Ascending aorta (tissue), 2 donors: ENCODE measurements at regions of chr21 and their contacts with region 1.

Region 1: DNA sequence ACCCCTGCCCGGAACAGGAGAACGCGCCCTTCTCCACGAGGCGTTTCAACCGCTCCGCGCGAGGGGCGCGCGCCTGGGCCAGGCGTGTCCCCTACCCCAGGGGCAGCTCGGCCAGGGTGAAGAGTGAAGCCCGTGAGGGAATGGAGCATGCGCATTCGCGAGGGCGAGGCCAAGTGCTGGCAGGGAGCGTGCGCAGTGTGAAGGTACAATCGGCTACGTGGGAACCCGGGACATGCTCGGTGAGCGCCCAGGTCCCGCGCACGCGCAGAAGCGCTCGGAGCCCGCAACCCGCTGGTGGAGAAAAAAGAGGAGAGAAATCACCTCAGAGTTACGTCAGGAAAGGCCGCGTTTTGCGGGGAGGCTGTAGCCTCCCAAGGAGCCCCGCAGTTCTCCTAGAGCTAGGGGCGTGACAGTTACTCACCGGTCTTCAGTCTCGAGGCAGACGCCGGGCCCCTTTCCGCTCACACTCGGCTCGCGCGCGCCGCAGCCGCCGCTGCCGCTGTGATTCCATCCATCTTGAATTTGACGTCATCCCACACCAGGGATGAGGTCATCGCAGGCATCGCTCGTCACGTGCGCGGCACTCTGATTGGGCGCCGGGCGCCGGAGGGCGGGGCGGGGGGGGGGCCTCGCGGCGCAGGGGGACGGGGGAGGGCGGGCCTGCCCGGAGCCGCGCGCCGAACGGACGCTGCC is at the start of gene ZBTB21:
- DNase-seq: peak; percentile 95 to 99
- H3K4me3 ChIP-seq: peak within 1 kb of the TSS; percentile 94 to 98
- H3K27ac ChIP-seq: peak within 1 kb of the TSS; percentile 96 to 97
- H3K4me1 ChIP-seq: peaks cover 0 to 5% of the 10 kb centered on the region in 2 donors
- H3K27me3 ChIP-seq: no peaks in the 10 kb centered on the region
- CTCF ChIP-seq: no peak
- total RNA-seq, gene ZBTB21: 11.1 TPM

Region 2: DNA sequence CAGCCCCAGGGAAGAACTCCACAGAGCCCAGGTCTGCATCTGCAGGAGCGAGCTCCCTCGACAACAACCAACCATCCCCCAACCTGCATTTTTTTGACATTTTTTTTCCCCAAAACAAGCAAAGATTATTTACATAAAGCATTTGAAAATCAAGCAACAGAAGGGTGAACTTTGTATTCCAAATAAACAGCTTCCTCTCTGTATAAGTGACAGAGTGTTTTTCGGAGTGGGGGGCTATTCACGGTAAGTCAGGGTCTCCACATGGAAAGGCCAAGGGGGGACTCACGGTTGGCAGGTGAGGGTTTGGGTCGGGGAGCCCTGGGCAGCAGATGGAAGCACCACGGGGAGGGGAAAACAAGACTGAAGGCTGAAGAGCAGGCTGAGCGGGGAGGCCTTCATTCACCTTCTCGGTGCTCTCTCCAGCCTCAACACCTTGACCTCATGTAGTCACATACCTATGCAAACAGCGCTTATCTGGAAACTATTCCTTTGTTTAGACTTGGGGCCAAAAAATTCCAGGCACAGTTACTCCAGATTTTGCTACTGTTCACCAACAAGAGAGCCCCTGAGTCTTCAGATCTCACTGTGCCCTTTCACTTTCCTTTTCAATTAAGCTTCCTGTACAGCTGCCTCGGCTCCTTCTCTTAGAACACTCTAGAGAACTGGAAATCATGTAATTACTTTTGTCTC is 83.7 kb before region 1 on chr21:
- intact Hi-C with region 1: loop called (anchors 1 kb)
- DNase-seq: no peak
- H3K4me3 ChIP-seq: peak overlapping the region; percentile 39 to 58
- H3K27ac ChIP-seq: peak overlapping the region; percentile 92 to 97
- H3K4me1 ChIP-seq: peaks cover 12 to 35% of the 10 kb centered on the region in 2 donors
- H3K27me3 ChIP-seq: no peaks in the 10 kb centered on the region
- CTCF ChIP-seq: no peak

Region 3: DNA sequence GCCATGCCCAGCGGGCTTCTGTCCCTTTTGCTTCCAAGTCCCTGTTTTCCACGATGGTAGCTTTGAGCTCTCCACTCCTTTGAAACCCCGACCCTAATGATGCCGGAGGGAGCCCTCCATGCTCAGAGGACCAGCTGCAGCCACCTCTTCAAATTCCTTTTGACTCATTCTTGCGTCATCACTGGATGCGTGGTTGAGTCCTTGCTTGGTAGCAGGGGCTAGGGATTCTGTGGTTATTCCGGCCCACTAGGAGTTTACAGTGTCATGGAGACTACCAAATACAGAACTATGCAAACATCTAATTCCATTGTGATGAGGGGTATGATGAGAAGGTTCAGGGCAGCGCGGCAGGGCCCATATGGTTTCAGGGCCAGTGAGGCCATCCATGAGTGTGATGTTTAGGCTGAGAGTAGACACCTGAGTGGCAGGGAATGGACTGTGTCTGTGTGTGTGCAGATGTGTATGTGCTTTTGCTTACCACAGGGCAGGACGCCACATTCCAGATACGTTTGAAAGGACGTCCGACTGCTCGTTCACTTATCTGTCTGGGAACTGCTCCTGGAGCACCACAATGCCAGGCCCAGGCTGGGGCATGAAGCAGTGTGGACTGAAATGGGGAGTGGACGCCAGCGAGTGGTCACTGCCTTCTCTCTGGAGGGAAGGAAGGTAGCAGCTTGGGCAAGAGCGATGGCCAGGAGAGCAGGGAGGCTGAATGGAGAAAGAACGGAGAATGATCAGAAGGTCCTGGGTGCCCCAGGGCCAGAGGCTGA is 30.6 kb after region 1 on chr21:
- intact Hi-C with region 1: loop called (anchors 1 kb)
- DNase-seq: peak in 1 of 2 donors; percentile 85
- H3K4me3 ChIP-seq: no peak overlapping the region
- H3K27ac ChIP-seq: peak overlapping the region; percentile 48 to 67
- H3K4me1 ChIP-seq: peaks cover 7 to 9% of the 10 kb centered on the region in 2 donors
- H3K27me3 ChIP-seq: no peaks in the 10 kb centered on the region
- CTCF ChIP-seq: no peak

Region 4: GRCh38 chr21:42056996-42057689 is 47.2 kb after region 1 on chr21:
- intact Hi-C with region 1: loop called (anchors 2 kb)
- DNase-seq: peak in 1 of 2 donors; percentile 92
- H3K4me3 ChIP-seq: peak overlapping the region in 1 of 2 donors; percentile 41
- H3K27ac ChIP-seq: peak overlapping the region; percentile 87 to 94
- H3K4me1 ChIP-seq: peaks cover 4 to 21% of the 10 kb centered on the region in 2 donors
- H3K27me3 ChIP-seq: no peaks in the 10 kb centered on the region
- CTCF ChIP-seq: no peak

Region 5: GRCh38 chr21:42067531-42068255 is 57.7 kb after region 1 on chr21:
- intact Hi-C with region 1: no loop called
- DNase-seq: no peak
- H3K4me3 ChIP-seq: no peak overlapping the region
- H3K27ac ChIP-seq: no peak overlapping the region
- H3K4me1 ChIP-seq: no peaks in the 10 kb centered on the region
- H3K27me3 ChIP-seq: no peaks in the 10 kb centered on the region
- CTCF ChIP-seq: no peak

Region 6: GRCh38 chr21:42117229-42117966 is 107.4 kb after region 1 on chr21:
- intact Hi-C with region 1: loop called (anchors 1 kb)
- DNase-seq: peak in 1 of 2 donors; percentile 89
- H3K4me3 ChIP-seq: peak overlapping the region in 1 of 2 donors; percentile 32
- H3K27ac ChIP-seq: no peak overlapping the region
- H3K4me1 ChIP-seq: no peaks in the 10 kb centered on the region
- H3K27me3 ChIP-seq: no peaks in the 10 kb centered on the region
- CTCF ChIP-seq: peak; percentile 91 to 95 (median 95)